Psoas muscle (tissue), 8 donors: ENCODE measurements at regions of chr15 and their contacts with region 1.

Region 1: DNA sequence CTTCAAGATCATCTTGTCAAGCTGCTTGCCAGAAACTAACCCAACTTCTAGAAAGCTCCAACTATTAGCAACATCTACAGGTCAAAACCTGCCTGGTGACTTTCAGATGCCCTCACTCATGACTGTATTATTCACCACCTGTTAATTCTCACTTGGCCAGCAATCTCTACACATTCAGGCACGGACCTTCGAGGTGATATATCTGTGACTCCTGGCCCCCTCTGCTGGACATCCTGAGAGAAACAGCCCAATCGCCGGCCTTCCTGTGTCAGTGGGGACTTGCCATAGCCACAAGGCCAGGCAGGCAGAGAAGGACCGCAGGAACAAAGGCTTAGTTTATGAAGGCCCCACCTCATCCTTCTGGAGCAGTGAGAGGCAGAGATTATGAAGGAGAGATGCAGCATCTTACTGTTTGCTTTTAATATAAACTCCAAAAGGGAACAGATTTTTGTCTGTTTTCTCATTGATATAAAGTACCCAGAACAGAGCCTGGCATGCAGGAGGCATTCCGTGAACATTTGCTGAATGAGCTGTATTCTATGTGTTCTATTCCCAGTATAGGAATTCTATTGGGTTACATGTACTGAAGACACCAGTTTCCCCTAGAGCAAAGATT is 24.4 kb upstream of the OCA2 start:
- DNase-seq: peak; percentile 51 to 68
- ATAC-seq: peak; percentile 75 to 89 (median 84)
- H3K4me3 ChIP-seq: no peak overlapping the region
- H3K27ac ChIP-seq: no peak overlapping the region
- H3K4me1 ChIP-seq: no peaks in the 10 kb centered on the region
- H3K27me3 ChIP-seq: no peaks in the 10 kb centered on the region
- CTCF ChIP-seq: peak; percentile 58

Region 2: DNA sequence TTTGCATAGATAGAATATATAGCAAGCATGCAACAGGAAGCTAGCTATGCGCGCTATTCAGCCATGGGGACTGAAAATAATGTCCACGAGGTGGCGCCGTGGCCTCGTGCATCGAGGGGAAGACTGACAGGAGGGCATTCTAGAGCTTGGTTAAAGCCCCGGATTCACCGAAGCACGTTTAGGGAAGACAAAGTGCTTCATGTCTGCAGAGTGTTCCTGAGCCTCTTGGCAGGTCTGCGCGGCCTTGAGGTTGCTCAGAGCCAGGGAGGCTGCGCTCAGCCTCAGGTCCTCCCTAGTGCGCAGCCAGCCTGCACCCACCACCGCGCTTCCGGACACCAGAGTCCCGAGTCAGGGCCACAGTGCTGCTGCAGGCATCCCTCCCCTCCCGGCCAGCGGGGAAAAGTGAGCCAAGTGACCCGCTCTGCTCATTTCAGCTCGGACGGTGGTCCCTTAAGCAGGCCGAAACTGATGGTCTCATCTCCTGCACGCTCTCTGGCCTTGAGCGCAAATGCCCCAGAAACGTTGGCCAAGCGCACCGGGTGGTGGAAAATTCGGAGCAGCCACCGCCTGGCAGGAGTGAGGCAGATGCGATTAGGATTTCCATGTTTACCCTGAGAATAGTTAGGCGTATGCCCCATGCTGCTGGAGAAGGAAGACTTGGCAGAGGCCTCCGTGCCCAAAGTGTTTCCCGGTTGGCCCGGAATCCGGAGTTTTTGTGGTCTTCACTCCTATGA is 1231.9 kb before region 1 on chr15:
- intact Hi-C with region 1: loop called in 1 of 2 experiments (anchors 10 kb)
- DNase-seq: no peak
- ATAC-seq: peak in 1 of 4 donors; percentile 42
- H3K4me3 ChIP-seq: no peak overlapping the region
- H3K27ac ChIP-seq: no peak overlapping the region
- H3K4me1 ChIP-seq: no peaks in the 10 kb centered on the region
- H3K27me3 ChIP-seq: peaks cover 0 to 22% (median 6%) of the 10 kb centered on the region in 3 donors
- CTCF ChIP-seq: peak; percentile 32

Region 3: GRCh38 chr15:26901041-26901440 is 1222.5 kb before region 1 on chr15:
- intact Hi-C with region 1: loop called in 1 of 2 experiments (anchors 10 kb)
- DNase-seq: no peak
- ATAC-seq: no peak
- H3K4me3 ChIP-seq: no peak overlapping the region
- H3K27ac ChIP-seq: no peak overlapping the region
- H3K4me1 ChIP-seq: no peaks in the 10 kb centered on the region
- H3K27me3 ChIP-seq: no peaks in the 10 kb centered on the region
- CTCF ChIP-seq: no peak

Region 4: GRCh38 chr15:27776501-27776900 is 347.0 kb before region 1 on chr15:
- intact Hi-C with region 1: loop called in 1 of 2 experiments (anchors 5 kb)
- DNase-seq: no peak
- ATAC-seq: no peak
- H3K4me3 ChIP-seq: no peak overlapping the region
- H3K27ac ChIP-seq: no peak overlapping the region
- H3K4me1 ChIP-seq: no peaks in the 10 kb centered on the region
- H3K27me3 ChIP-seq: no peaks in the 10 kb centered on the region
- CTCF ChIP-seq: no peak

Region 5: GRCh38 chr15:28075573-28075972 is 47.9 kb before region 1 on chr15:
- intact Hi-C with region 1: no loop called
- DNase-seq: no peak
- ATAC-seq: no peak
- H3K4me3 ChIP-seq: no peak overlapping the region
- H3K27ac ChIP-seq: no peak overlapping the region
- H3K4me1 ChIP-seq: no peaks in the 10 kb centered on the region
- H3K27me3 ChIP-seq: no peaks in the 10 kb centered on the region
- CTCF ChIP-seq: no peak

Region 6: DNA sequence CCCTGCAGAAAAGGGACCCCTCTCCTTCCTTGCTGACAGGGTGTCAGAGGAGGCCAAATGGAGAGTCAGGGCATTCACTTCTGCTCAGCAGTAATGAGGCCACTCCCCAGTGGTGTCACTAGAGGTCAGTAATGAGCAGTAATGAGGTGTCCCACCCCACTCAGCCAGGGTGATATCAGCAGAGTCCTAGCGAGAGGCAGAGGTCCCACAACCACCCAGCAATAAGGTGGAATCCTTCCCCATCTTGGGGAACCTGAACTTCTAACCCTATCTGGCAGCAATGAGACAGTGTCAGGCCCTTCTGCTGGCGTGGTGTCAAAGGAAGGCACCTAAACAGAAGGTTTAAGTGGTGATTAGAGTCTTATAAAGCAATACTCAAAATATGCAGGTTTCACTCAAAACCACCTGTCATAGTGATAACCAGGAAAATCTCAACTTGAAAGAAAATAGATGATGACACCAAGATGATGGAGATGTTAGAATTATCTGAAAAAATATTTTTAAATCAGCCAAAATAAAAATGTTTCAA is 37.3 kb before region 1 on chr15:
- intact Hi-C with region 1: loop called in 1 of 2 experiments (anchors 2 kb)
- DNase-seq: no peak
- ATAC-seq: peak; percentile 79 to 90 (median 86)
- H3K4me3 ChIP-seq: no peak overlapping the region
- H3K27ac ChIP-seq: no peak overlapping the region
- H3K4me1 ChIP-seq: no peaks in the 10 kb centered on the region
- H3K27me3 ChIP-seq: no peaks in the 10 kb centered on the region
- CTCF ChIP-seq: peak; percentile 56